Body of pancreas (tissue), 4 donors: ENCODE measurements at regions of chr13 and their contacts with region 1.

Region 1: DNA sequence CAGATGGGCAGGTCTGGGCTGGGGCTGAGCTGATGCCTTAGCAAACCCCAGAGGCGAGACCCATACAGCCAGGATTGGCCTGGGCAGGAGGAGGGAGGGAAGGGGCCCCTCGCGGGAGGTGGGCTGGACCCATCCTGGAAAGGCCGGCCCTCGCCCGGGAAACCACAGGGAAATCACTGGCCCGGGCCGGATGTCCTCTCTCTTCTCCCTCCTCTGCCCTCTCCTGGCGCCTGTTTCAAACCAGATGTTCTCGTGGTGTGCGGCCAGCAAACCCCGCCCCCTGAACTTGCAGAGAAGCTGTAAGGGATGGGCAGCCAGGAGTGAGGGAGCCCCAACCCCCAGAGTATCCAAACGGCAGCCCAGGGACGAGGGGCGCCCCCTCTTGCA is 43.1 kb downstream of the TMEM255B start:
- DNase-seq: peak in 1 of 4 donors; percentile 33
- ATAC-seq: peak; percentile 19
- H3K4me3 ChIP-seq: no peak overlapping the region
- H3K27ac ChIP-seq: no peak overlapping the region
- H3K4me1 ChIP-seq: no peaks in the 10 kb centered on the region
- H3K27me3 ChIP-seq: no peaks in the 10 kb centered on the region
- CTCF ChIP-seq: no peak
- POLR2A ChIP-seq: no peak

Region 2: DNA sequence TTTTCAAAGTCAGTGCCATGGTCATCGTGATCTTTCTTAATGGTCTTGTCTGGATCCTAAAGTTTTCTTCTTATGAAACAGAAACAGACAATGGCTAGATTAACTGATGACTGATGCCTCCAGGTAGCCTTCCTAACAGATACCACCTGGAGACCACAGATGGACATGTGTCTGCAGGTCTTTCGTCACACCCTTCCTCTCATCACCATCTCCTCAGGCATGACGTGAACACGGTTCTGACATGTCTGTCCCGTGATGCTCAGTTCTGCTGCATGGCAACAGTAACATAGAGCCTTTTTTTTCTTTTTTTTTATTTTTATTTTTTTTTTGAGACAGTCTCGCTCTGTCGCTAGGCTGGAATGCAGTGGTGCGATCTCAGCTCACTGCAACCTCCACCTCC is 518.2 kb before region 1 on chr13:
- intact Hi-C with region 1: no loop called
- DNase-seq: no peak
- ATAC-seq: no peak
- H3K4me3 ChIP-seq: no peak overlapping the region
- H3K27ac ChIP-seq: no peak overlapping the region
- H3K4me1 ChIP-seq: no peaks in the 10 kb centered on the region
- H3K27me3 ChIP-seq: no peaks in the 10 kb centered on the region
- CTCF ChIP-seq: no peak
- POLR2A ChIP-seq: no peak

Region 3: GRCh38 chr13:114019367-114019766 is 217.2 kb after region 1 on chr13:
- intact Hi-C with region 1: loop called (anchors 10 kb)
- DNase-seq: no peak
- ATAC-seq: no peak
- H3K4me3 ChIP-seq: no peak overlapping the region
- H3K27ac ChIP-seq: no peak overlapping the region
- H3K4me1 ChIP-seq: no peaks in the 10 kb centered on the region
- H3K27me3 ChIP-seq: no peaks in the 10 kb centered on the region
- CTCF ChIP-seq: no peak
- POLR2A ChIP-seq: no peak